ENCODE measurements at regions of chr13 and their contacts with region 1.

Region 1: DNA sequence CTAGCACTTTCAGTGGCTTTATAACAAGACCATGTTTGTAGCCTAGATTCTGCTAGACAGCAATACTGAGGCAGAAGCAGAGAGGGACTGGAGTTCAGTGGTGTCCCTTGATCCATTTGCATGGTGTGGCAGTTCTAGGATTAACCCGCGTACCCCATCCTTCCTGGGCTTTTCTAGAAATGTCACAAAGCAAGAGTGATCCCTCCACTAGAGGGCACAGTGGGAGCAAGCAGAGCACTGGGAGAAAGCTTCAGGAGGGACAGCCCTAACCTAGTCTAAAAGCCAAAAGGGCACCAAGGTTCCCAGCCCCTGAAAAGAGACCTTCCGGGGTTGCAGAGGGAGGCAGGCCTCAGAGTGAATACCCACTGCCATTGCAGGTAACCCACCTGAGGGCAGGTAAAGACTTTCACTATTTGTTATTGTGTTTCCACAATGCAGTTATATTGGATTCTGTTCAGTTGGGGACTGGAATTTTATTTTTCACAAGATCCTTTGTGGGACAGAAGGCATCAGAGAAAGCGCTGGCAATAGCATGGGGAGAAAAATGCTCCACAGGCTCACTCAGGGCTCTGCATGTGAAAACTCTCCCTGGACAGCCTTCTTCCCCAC is 170.6 kb downstream of the FLT1 start:
- DNase-seq: peak; percentile 51 to 81
- H3K4me3 ChIP-seq: no peak overlapping the region
- H3K27ac ChIP-seq: no peak overlapping the region
- H3K4me1 ChIP-seq: no peaks in the 10 kb centered on the region
- H3K27me3 ChIP-seq: no peaks in the 10 kb centered on the region
- CTCF ChIP-seq: peak; percentile 59 to 85 (median 77)
- EP300 ChIP-seq: no peak
- POLR2A ChIP-seq: no peak
- RAD21 ChIP-seq: peak; percentile 90 to 92

Region 2: GRCh38 chr13:28267497-28267896 is 56.8 kb before region 1 on chr13:
- CTCF ChIA-PET with region 1: no interaction called
- POLR2A ChIA-PET with region 1: no interaction called
- DNase-seq: no peak
- H3K4me3 ChIP-seq: no peak overlapping the region
- H3K27ac ChIP-seq: no peak overlapping the region
- H3K4me1 ChIP-seq: no peaks in the 10 kb centered on the region
- H3K27me3 ChIP-seq: peaks cover 0 to 1% (median 0%) of the 10 kb centered on the region in 4 experiments; a peak in 1 of 7 replicates
- CTCF ChIP-seq: no peak
- EP300 ChIP-seq: no peak
- POLR2A ChIP-seq: no peak
- RAD21 ChIP-seq: no peak

Region 3: GRCh38 chr13:28313579-28313978 is 10.7 kb before region 1 on chr13:
- CTCF ChIA-PET with region 1: interaction called, 20 read pairs
- POLR2A ChIA-PET with region 1: no interaction called
- DNase-seq: no peak
- H3K4me3 ChIP-seq: no peak overlapping the region
- H3K27ac ChIP-seq: no peak overlapping the region
- H3K4me1 ChIP-seq: peaks cover 0 to 4% (median under 1%) of the 10 kb centered on the region in 4 experiments; a peak in 2 of 7 replicates
- H3K27me3 ChIP-seq: no peaks in the 10 kb centered on the region
- CTCF ChIP-seq: peak in 2 of 3 experiments; percentile 30 to 45; a peak in 2 of 4 replicates
- EP300 ChIP-seq: no peak
- POLR2A ChIP-seq: no peak
- RAD21 ChIP-seq: peak; percentile 41 to 57

Region 4: GRCh38 chr13:28337166-28338005 is 13.1 kb after region 1 on chr13:
- CTCF ChIA-PET with region 1: interaction called, 10 read pairs
- POLR2A ChIA-PET with region 1: interaction called, 3 read pairs
- DNase-seq: no peak
- H3K4me3 ChIP-seq: no peak overlapping the region
- H3K27ac ChIP-seq: no peak overlapping the region
- H3K4me1 ChIP-seq: no peaks in the 10 kb centered on the region
- H3K27me3 ChIP-seq: no peaks in the 10 kb centered on the region
- CTCF ChIP-seq: no peak
- EP300 ChIP-seq: no peak
- POLR2A ChIP-seq: no peak
- RAD21 ChIP-seq: no peak

Region 5: GRCh38 chr13:28636674-28637317 is 312.5 kb after region 1 on chr13:
- CTCF ChIA-PET with region 1: interaction called, 10 read pairs
- POLR2A ChIA-PET with region 1: no interaction called
- DNase-seq: peak; percentile 54 to 63
- H3K4me3 ChIP-seq: no peak overlapping the region
- H3K27ac ChIP-seq: no peak overlapping the region
- H3K4me1 ChIP-seq: peaks cover 0 to 3% (median 1%) of the 10 kb centered on the region in 4 experiments; a peak in 3 of 7 replicates
- H3K27me3 ChIP-seq: no peaks in the 10 kb centered on the region
- CTCF ChIP-seq: peak; percentile 70 to 90 (median 85)
- EP300 ChIP-seq: no peak
- POLR2A ChIP-seq: no peak
- RAD21 ChIP-seq: peak; percentile 94 to 98